Endothelial cell of umbilical vein (primary cell): ENCODE measurements at regions of chr6 and their contacts with region 1.

Region 1: GRCh38 chr6:28683944-28684538 is 158.4 kb downstream of the GPX5 start:
- DNase-seq: peak; percentile 55
- H3K4me3 ChIP-seq: no peak overlapping the region
- H3K27ac ChIP-seq: no peak overlapping the region
- H3K4me1 ChIP-seq: peaks cover 7% of the 10 kb centered on the region
- H3K27me3 ChIP-seq: peaks cover 20 to 25% of the 10 kb centered on the region in 2 experiments
- CTCF ChIP-seq: peak; percentile 43 to 48
- POLR2A ChIP-seq: no peak

Region 2: GRCh38 chr6:27157459-27158315 is 1526.4 kb before region 1 on chr6:
- CTCF ChIA-PET with region 1: no interaction called
- POLR2A ChIA-PET with region 1: no interaction called
- dilution Hi-C with region 1: no loop called
- intact Hi-C with region 1: loop called (anchors 10 kb)
- DNase-seq: peak; percentile 57
- H3K4me3 ChIP-seq: peak overlapping the region; percentile 30 to 64 (median 59)
- H3K27ac ChIP-seq: no peak overlapping the region
- H3K4me1 ChIP-seq: peaks cover 10% of the 10 kb centered on the region
- H3K27me3 ChIP-seq: peaks cover 8 to 11% of the 10 kb centered on the region in 2 experiments
- CTCF ChIP-seq: peak; percentile 42 to 63
- POLR2A ChIP-seq: no peak

Region 3: GRCh38 chr6:28355743-28356665 is 328.0 kb before region 1 on chr6:
- CTCF ChIA-PET with region 1: no interaction called
- POLR2A ChIA-PET with region 1: no interaction called
- dilution Hi-C with region 1: no loop called
- intact Hi-C with region 1: loop called (anchors 2 kb)
- DNase-seq: peak; percentile 93
- H3K4me3 ChIP-seq: peak overlapping the region; percentile 52 to 84 (median 55)
- H3K27ac ChIP-seq: peak overlapping the region; percentile 60
- H3K4me1 ChIP-seq: peaks cover 36% of the 10 kb centered on the region
- H3K27me3 ChIP-seq: no peaks in the 10 kb centered on the region
- CTCF ChIP-seq: peak; percentile 66 to 73
- POLR2A ChIP-seq: peak; percentile 40

Region 4: GRCh38 chr6:28586962-28587745 is 96.9 kb before region 1 on chr6:
- CTCF ChIA-PET with region 1: no interaction called
- POLR2A ChIA-PET with region 1: no interaction called
- dilution Hi-C with region 1: no loop called
- intact Hi-C with region 1: loop called (anchors 2 kb)
- DNase-seq: no peak
- H3K4me3 ChIP-seq: peak overlapping the region; percentile 6 to 50 (median 25)
- H3K27ac ChIP-seq: no peak overlapping the region
- H3K4me1 ChIP-seq: peaks cover 12% of the 10 kb centered on the region
- H3K27me3 ChIP-seq: peaks cover 22 to 47% of the 10 kb centered on the region in 2 experiments
- CTCF ChIP-seq: no peak
- POLR2A ChIP-seq: no peak

Region 5: DNA sequence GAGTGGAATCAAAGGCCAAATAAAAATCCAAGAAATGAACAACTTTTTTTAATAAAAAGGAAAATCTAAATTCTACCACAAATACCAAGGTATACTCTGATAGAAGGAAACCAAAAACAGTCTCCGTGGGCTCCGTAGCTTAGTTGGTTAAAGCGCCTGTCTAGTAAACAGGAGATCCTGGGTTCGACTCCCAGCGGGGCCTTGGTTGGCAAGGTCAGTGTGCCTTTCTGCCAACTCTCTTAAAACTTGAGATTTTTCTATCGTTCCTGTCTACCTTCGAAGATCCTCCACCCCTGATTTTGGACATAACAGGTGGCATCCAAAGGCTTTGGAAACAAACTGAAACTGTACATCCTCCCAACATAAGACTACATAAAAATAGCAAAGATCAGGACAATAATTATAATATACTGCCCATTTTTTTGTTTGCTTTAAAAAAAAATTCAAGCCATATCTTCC is 41.9 kb after region 1 on chr6:
- CTCF ChIA-PET with region 1: no interaction called
- POLR2A ChIA-PET with region 1: no interaction called
- dilution Hi-C with region 1: no loop called
- intact Hi-C with region 1: loop called (anchors 2 kb)
- DNase-seq: no peak
- H3K4me3 ChIP-seq: no peak overlapping the region
- H3K27ac ChIP-seq: no peak overlapping the region
- H3K4me1 ChIP-seq: peaks cover 4% of the 10 kb centered on the region
- H3K27me3 ChIP-seq: peaks cover 9 to 12% of the 10 kb centered on the region in 2 experiments
- CTCF ChIP-seq: no peak
- POLR2A ChIP-seq: no peak

Region 6: GRCh38 chr6:28802417-28803336 is 118.6 kb after region 1 on chr6:
- CTCF ChIA-PET with region 1: no interaction called
- POLR2A ChIA-PET with region 1: no interaction called
- dilution Hi-C with region 1: no loop called
- intact Hi-C with region 1: no loop called
- DNase-seq: peak; percentile 25
- H3K4me3 ChIP-seq: no peak overlapping the region
- H3K27ac ChIP-seq: no peak overlapping the region
- H3K4me1 ChIP-seq: no peaks in the 10 kb centered on the region
- H3K27me3 ChIP-seq: peaks cover 9 to 16% of the 10 kb centered on the region in 2 experiments
- CTCF ChIP-seq: no peak
- POLR2A ChIP-seq: no peak

Region 7: GRCh38 chr6:28863604-28864320 is 179.7 kb after region 1 on chr6:
- CTCF ChIA-PET with region 1: no interaction called
- POLR2A ChIA-PET with region 1: no interaction called
- dilution Hi-C with region 1: no loop called
- intact Hi-C with region 1: no loop called
- DNase-seq: peak; percentile 91
- H3K4me3 ChIP-seq: peak overlapping the region; percentile 64 to 91 (median 83)
- H3K27ac ChIP-seq: peak overlapping the region; percentile 9
- H3K4me1 ChIP-seq: peaks cover 16% of the 10 kb centered on the region
- H3K27me3 ChIP-seq: peaks cover 5% of the 10 kb centered on the region in 2 experiments
- CTCF ChIP-seq: no peak
- POLR2A ChIP-seq: no peak

Region 8: GRCh38 chr6:28940858-28941680 is 257.0 kb after region 1 on chr6:
- CTCF ChIA-PET with region 1: no interaction called
- POLR2A ChIA-PET with region 1: no interaction called
- dilution Hi-C with region 1: no loop called
- intact Hi-C with region 1: loop called (anchors 2 kb)
- DNase-seq: peak; percentile 96
- H3K4me3 ChIP-seq: peak overlapping the region; percentile 46 to 89 (median 87)
- H3K27ac ChIP-seq: peak overlapping the region; percentile 67
- H3K4me1 ChIP-seq: peaks cover 11% of the 10 kb centered on the region
- H3K27me3 ChIP-seq: no peaks in the 10 kb centered on the region
- CTCF ChIP-seq: no peak
- POLR2A ChIP-seq: no peak

Region 9: DNA sequence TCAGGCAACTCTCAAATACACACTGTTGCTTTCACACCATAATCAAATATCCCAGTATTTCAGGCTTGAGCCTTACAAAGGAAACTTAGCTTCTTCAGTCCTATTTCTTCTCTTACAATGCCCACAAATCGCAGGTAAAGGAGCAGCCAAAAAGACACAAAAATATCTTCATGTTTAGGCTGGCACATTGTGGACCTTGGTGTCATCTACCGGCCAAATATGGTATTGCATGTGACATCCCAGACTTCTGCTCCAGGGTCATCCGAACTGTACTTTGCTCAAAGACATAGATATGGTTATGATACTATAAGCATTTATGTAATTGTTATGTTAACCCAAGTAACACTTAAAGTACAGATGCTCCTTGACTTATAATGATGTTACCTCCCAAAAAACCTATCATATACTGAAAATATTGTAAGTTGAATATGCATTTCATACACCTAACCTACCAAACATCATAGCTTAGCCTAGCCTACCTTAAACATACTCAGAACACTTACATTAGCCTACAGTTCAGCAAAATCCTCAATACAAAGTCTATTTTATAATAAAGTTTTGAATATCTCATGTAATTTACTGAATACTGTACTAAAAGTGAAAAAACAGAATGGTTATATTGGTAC is 905.5 kb after region 1 on chr6:
- CTCF ChIA-PET with region 1: no interaction called
- POLR2A ChIA-PET with region 1: no interaction called
- dilution Hi-C with region 1: no loop called
- intact Hi-C with region 1: loop called (anchors 1 kb)
- DNase-seq: peak; percentile 57
- H3K4me3 ChIP-seq: no peak overlapping the region
- H3K27ac ChIP-seq: no peak overlapping the region
- H3K4me1 ChIP-seq: no peaks in the 10 kb centered on the region
- H3K27me3 ChIP-seq: peaks cover 0 to 8% of the 10 kb centered on the region in 2 experiments
- CTCF ChIP-seq: peak; percentile 73 to 84
- POLR2A ChIP-seq: no peak